ENCODE measurements at regions of chr21 and their contacts with region 1.

Region 1: GRCh38 chr21:37575580-37575979 is 209.0 kb downstream of the DYRK1A start:
- DNase-seq: no peak
- H3K4me3 ChIP-seq: no peak overlapping the region
- H3K27ac ChIP-seq: no peak overlapping the region
- H3K4me1 ChIP-seq: no peaks in the 10 kb centered on the region
- H3K27me3 ChIP-seq: no peaks in the 10 kb centered on the region
- CTCF ChIP-seq: no peak
- POLR2A ChIP-seq: no peak

Region 2: GRCh38 chr21:37593015-37593414 is 17.4 kb after region 1 on chr21:
- intact Hi-C with region 1: loop called (anchors 1 kb)
- DNase-seq: no peak
- H3K4me3 ChIP-seq: no peak overlapping the region
- H3K27ac ChIP-seq: no peak overlapping the region
- H3K4me1 ChIP-seq: no peaks in the 10 kb centered on the region
- H3K27me3 ChIP-seq: no peaks in the 10 kb centered on the region
- CTCF ChIP-seq: no peak
- POLR2A ChIP-seq: no peak

Measured in breast epithelium (tissue), 4 donors.